ENCODE measurements at regions of chr12 and their contacts with region 1.

Region 1: DNA sequence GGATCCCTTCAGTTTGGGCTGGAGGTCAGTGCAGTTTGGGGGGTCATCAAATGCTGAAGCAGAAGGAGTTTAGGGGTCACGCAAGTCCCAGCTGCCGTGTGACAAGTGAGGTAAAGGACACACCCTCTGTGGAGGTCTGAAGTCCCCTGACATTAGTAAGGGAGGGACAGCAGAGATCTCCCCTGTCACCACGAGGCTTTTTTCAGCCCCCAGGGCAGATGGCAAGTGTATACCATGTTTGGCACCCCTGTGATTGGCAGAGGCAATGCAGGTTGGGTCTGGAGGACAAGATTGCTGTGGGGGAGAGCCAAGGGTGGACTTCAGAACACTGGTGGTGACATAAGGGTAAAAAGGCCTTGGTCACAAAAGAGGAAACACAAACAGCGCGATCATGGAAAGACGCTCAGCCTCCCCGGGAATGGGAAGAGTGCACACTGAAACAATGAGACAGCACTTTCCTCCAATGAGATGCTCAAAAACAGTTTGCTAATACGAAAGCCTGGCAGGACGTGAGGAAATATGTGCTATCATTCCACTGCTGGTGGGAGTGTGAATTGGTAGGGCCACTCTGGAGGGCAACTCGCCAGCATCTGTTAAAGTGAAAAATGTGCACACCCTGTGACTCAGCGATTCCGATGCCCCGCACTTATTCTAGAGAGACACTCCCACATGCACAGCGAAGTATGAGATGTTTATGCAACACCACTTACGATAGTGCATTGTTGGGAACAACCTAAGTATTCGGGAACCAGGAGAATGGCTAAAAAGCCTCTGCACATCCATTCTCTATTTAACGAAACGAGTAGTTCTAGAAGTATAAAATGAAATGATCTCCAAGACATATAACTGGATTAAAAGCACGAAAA is 14.4 kb upstream of the CD27 start:
- DNase-seq: peak in 1 of 2 donors; percentile 98
- H3K4me3 ChIP-seq: peak overlapping the region; percentile 34 to 37
- H3K27ac ChIP-seq: peak overlapping the region; percentile 89
- H3K4me1 ChIP-seq: peaks cover 16% of the 10 kb centered on the region
- H3K27me3 ChIP-seq: no peaks in the 10 kb centered on the region
- CTCF ChIP-seq: peak in 1 of 3 experiments; percentile 13
- POLR2A ChIP-seq: no peak

Region 2: DNA sequence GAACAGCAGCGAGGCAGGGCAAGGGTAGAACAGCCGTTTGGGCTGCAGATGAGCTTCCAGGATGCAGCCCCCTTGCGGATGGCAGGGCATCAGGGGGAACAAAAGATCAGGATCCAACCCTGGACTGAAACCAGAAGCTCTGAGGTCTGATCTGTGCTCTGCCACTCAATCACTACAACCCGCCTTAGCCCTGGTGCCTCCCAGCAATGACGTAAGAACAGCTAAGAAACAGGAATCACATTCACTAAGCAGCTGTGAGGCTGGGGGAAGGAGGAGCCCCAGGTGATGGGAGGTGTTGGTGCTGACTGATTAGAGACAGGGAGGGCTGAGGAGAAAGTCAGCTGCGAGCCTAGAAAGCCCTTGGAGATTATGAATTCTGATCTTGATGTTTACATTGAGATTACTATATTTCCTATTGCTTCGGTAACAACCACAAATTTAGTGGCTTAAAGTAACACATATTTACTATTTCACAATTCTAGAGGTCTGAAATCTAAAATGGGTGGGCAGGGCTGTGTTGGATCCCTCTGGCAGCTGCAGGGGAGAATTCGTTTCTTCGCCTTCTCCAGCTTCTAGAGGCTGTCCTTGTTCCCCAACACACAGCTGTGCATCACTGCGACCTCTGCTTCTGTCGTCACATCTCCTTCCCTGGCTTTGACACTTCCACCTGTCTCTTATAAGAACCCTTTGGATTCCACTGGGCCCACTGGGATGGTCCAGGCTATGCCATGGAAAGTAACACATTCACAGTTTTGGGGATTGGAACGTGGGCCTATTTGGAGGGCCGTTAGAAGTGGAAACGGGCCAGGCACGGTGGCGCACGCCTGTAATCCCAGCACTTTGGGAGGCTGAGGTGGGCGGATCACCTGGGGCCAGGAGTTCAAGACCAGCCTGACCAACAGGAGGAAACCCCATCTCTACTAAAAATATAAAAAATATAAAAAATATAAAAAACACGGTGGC is 236.2 kb before region 1 on chr12:
- intact Hi-C with region 1: no loop called
- DNase-seq: peak in 1 of 2 donors; percentile 85
- H3K4me3 ChIP-seq: no peak overlapping the region
- H3K27ac ChIP-seq: no peak overlapping the region
- H3K4me1 ChIP-seq: peaks cover 26% of the 10 kb centered on the region
- H3K27me3 ChIP-seq: no peaks in the 10 kb centered on the region
- CTCF ChIP-seq: no peak
- POLR2A ChIP-seq: no peak

Region 3: DNA sequence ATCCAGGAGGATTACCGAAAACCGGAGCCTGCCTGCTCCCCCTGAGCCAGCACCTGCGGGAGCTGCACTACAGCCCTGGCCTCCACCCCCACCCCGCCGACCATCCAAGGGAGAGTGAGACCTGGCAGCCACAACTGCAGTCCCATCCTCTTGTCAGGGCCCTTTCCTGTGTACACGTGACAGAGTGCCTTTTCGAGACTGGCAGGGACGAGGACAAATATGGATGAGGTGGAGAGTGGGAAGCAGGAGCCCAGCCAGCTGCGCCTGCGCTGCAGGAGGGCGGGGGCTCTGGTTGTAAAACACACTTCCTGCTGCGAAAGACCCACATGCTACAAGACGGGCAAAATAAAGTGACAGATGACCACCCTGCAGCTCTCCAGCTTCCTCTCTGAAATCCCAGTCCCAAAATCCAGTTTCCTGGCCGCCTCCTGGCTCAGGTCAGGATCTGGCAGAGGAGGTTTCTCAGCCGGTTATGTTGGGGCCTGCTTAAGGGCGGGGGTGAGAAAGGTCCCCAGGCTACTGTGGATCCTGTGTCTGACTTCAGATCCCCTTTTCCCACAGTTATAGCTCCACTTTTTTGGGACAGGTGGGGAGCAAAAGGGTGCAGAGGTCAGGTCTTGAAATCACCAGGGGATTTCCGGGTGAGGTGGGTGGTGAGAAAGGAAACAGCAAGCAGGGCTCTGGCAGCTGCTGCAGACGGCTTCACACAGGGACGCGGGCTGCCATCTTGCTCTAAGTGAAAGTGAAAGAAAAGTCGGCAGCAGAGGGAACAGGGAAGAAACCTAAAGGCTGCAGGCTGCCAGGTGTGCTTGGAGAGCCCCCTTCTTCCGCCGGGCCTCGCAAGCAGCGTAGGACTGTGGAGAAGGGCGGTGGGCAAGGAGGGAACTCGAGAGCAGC is 21.2 kb after region 1 on chr12 and contains the start of gene TAPBPL:
- intact Hi-C with region 1: loop called (anchors 2 kb)
- DNase-seq: peak in 1 of 2 donors; percentile 95
- H3K4me3 ChIP-seq: peak within 1 kb of the TSS; percentile 70 to 80
- H3K27ac ChIP-seq: peak within 1 kb of the TSS; percentile 95
- H3K4me1 ChIP-seq: peaks cover 37% of the 10 kb centered on the region
- H3K27me3 ChIP-seq: no peaks in the 10 kb centered on the region
- CTCF ChIP-seq: no peak
- POLR2A ChIP-seq: peak in 1 of 2 donors; percentile 63
- total RNA-seq, gene TAPBPL: 21.1 TPM

Region 4: DNA sequence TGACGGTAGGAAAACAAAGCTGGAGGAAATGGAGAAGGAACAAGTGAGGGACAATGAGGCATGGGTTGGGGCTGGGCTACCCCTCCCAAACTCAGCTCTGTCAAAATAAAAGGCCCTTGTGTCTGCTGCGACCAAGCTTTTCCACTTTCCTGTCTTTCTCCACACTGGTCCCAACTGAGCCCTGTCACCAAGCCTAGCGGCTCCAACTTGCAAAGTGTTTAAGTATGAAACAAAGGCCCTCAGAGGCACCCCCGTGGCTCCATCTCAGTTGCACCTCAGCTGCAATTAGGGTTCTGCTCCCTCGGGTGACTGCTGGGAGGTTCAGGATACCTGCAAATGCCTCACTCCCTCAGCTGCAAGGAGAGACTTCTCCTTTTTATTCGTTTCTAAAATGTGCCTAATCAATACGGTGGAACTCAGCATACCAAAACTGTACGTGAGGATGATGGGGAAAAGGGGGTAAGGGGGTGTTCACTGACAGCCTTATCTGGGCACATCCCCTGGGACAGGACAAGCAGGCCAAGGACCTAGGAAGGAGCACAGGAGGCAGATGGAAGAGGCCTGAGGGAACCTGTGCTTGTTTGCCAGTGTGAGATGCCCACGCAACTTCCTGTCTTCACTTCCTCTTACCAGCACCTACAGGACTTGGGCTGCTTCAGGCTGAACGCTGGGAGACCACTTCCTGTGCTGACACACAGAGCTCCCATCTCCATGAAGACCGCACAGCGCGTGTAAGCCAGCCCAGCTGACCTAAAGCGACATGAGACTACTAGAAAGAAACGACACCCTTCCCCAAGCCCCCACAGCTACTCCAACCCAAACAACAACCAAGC is 31.3 kb after region 1 on chr12:
- intact Hi-C with region 1: loop called (anchors 5 kb)
- DNase-seq: no peak
- H3K4me3 ChIP-seq: no peak overlapping the region
- H3K27ac ChIP-seq: no peak overlapping the region
- H3K4me1 ChIP-seq: peaks cover 19% of the 10 kb centered on the region
- H3K27me3 ChIP-seq: no peaks in the 10 kb centered on the region
- CTCF ChIP-seq: no peak
- POLR2A ChIP-seq: no peak

Region 5: GRCh38 chr12:6662906-6663742 is 232.8 kb after region 1 on chr12 and contains the start of gene ING4:
- intact Hi-C with region 1: no loop called
- DNase-seq: peak in 1 of 2 donors; percentile 99
- H3K4me3 ChIP-seq: peak within 1 kb of the TSS; percentile 69 to 70
- H3K27ac ChIP-seq: peak within 1 kb of the TSS; percentile 68
- H3K4me1 ChIP-seq: peaks cover 15% of the 10 kb centered on the region
- H3K27me3 ChIP-seq: no peaks in the 10 kb centered on the region
- CTCF ChIP-seq: no peak
- POLR2A ChIP-seq: no peak
- total RNA-seq, gene ING4: 45.7 TPM

Measured in vagina (tissue), 2 donors.